Activated CD4-positive, alpha-beta T cell treated with anti-CD3 and anti-CD28 coated beads for 36 hours (primary cell): ENCODE measurements at regions of chr7 and their contacts with region 1.

Region 1: GRCh38 chr7:100342765-100343164 is 15.2 kb upstream of the PILRB start:
- DNase-seq: no peak
- ATAC-seq: no peak
- H3K4me3 Mint-ChIP-seq: no peak overlapping the region
- H3K27ac Mint-ChIP-seq: peak overlapping the region; percentile 59
- H3K4me1 Mint-ChIP-seq: peaks cover 44% of the 10 kb centered on the region
- H3K27me3 Mint-ChIP-seq: no peaks in the 10 kb centered on the region

Region 2: GRCh38 chr7:100119062-100119700 is 223.6 kb before region 1 on chr7 and contains the starts of genes CNPY4 and TAF6:
- CTCF ChIA-PET with region 1: interaction called, 4 read pairs
- POLR2A ChIA-PET with region 1: no interaction called
- intact Hi-C with region 1: loop called in 1 of 2 experiments (anchors 1 kb)
- DNase-seq: peak; percentile 97
- ATAC-seq: peak; percentile 68
- H3K4me3 Mint-ChIP-seq: peak within 1 kb of the TSS; percentile 86
- H3K27ac Mint-ChIP-seq: peak within 1 kb of the TSS; percentile 94
- H3K4me1 Mint-ChIP-seq: peaks cover 19% of the 10 kb centered on the region
- H3K27me3 Mint-ChIP-seq: no peaks in the 10 kb centered on the region
- total RNA-seq, gene CNPY4: 11.0 to 14.0 TPM
- total RNA-seq, gene TAF6: 54.3 to 59.5 TPM

Region 3: GRCh38 chr7:100369105-100369504 is 26.3 kb after region 1 on chr7:
- CTCF ChIA-PET with region 1: interaction called, 5 read pairs
- POLR2A ChIA-PET with region 1: interaction called, 3 read pairs
- intact Hi-C with region 1: loop called in 1 of 2 experiments (anchors 1 kb)
- DNase-seq: no peak
- ATAC-seq: no peak
- H3K4me3 Mint-ChIP-seq: no peak overlapping the region
- H3K27ac Mint-ChIP-seq: no peak overlapping the region
- H3K4me1 Mint-ChIP-seq: peaks cover 40% of the 10 kb centered on the region
- H3K27me3 Mint-ChIP-seq: no peaks in the 10 kb centered on the region

Region 4: DNA sequence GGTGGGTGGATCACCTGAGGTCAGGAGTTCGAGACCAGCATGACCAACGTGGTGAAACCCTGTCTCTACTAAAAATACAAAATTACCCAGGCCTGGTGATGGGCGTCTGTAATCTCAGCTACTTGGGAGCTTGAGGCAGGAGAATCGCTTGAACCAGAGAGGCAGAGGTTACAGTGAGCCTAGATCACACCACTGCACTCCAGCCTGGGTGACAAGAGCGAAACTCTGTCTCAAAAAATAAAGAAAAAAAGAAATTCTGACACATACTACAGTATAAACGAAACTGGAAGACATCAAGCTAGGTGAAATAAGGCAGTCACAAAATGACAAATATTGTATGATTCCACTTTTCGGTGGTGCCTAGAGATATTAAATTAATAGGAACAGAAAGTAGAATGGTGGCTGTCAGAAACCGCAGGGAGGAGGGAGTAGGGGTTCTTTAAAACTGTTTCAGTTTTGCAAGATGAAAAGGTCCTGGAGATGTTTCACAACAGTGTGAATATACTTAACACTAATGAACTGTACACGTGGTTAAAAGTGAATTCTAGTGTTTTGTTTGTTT is 53.7 kb after region 1 on chr7:
- CTCF ChIA-PET with region 1: interaction called, 3 read pairs
- POLR2A ChIA-PET with region 1: interaction called, 3 read pairs
- intact Hi-C with region 1: loop called in 1 of 2 experiments (anchors 2 kb)
- DNase-seq: peak; percentile 82
- ATAC-seq: peak; percentile 92
- H3K4me3 Mint-ChIP-seq: peak overlapping the region; percentile 1
- H3K27ac Mint-ChIP-seq: peak overlapping the region; percentile 40
- H3K4me1 Mint-ChIP-seq: peaks cover 26% of the 10 kb centered on the region
- H3K27me3 Mint-ChIP-seq: peaks cover 20% of the 10 kb centered on the region

Region 5: GRCh38 chr7:100889761-100890634 is 547.2 kb after region 1 on chr7:
- CTCF ChIA-PET with region 1: no interaction called
- POLR2A ChIA-PET with region 1: no interaction called
- intact Hi-C with region 1: no loop called
- DNase-seq: peak; percentile 96
- ATAC-seq: peak; percentile 95
- H3K4me3 Mint-ChIP-seq: peak overlapping the region; percentile 77
- H3K27ac Mint-ChIP-seq: no peak overlapping the region
- H3K4me1 Mint-ChIP-seq: peaks cover 38% of the 10 kb centered on the region
- H3K27me3 Mint-ChIP-seq: peaks cover 14% of the 10 kb centered on the region